GM12878 (cell line): ENCODE measurements at regions of chr4 and their contacts with region 1.

Region 1: DNA sequence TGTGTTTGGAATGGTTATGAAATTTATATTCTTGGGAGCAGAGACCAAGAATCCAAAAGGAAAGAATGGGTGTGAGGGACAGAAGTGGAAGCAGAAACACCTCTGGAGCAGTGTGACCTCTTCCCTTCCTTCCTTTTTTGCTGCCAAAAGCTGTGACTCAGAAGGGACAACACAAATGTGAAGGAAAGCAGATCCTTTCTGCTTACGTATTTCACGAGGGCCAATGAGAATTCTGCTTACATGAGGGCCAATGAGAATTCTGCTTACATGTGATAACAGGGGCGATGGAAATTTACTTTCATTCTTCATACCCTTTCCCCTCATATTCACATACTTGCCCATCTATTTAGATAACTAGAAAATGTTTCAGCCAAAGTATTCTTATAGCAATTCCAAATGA is 404.6 kb downstream of the PRDM5 start:
- DNase-seq: peak; percentile 42
- ATAC-seq: peak; percentile 68
- H3K4me3 ChIP-seq: no peak overlapping the region
- H3K27ac ChIP-seq: no peak overlapping the region
- H3K4me1 ChIP-seq: no peaks in the 10 kb centered on the region
- H3K27me3 ChIP-seq: no peaks in the 10 kb centered on the region
- CTCF ChIP-seq: no peak
- EP300 ChIP-seq: no peak
- POLR2A ChIP-seq: no peak
- RAD21 ChIP-seq: no peak

Region 2: DNA sequence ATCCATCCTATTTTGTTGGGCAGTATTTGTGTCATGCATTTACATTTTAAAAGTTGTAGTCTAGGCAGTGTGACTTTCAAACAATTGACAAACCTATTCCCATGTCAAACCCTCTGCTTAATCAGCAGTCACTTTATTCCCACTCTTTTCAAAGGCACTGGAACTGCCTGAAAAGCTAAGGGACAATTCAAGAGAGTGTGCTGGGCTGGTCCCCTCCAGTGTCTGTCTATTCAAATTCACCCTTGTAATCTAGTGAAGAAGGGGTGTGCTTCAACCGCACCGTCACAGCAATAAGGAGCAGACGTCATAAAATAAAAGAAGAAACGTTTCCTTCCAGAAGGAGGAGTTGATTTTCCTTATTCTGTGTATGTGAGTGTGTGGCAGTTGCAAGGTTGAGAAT is 254.3 kb before region 1 on chr4:
- CTCF ChIA-PET with region 1: no interaction called
- POLR2A ChIA-PET with region 1: interaction called, 11 read pairs
- RAD21 ChIA-PET with region 1: no interaction called
- SMC1A ChIA-PET with region 1: no interaction called
- in situ Hi-C with region 1: no loop called
- intact Hi-C with region 1: no loop called
- DNase-seq: no peak
- ATAC-seq: no peak
- H3K4me3 ChIP-seq: no peak overlapping the region
- H3K27ac ChIP-seq: no peak overlapping the region
- H3K4me1 ChIP-seq: no peaks in the 10 kb centered on the region
- H3K27me3 ChIP-seq: no peaks in the 10 kb centered on the region
- CTCF ChIP-seq: no peak
- EP300 ChIP-seq: no peak
- POLR2A ChIP-seq: no peak
- RAD21 ChIP-seq: no peak

Region 3: GRCh38 chr4:120498678-120499077 is 19.3 kb before region 1 on chr4:
- CTCF ChIA-PET with region 1: no interaction called
- POLR2A ChIA-PET with region 1: no interaction called
- RAD21 ChIA-PET with region 1: no interaction called
- SMC1A ChIA-PET with region 1: no interaction called
- in situ Hi-C with region 1: no loop called
- intact Hi-C with region 1: no loop called
- DNase-seq: no peak
- ATAC-seq: no peak
- H3K4me3 ChIP-seq: no peak overlapping the region
- H3K27ac ChIP-seq: no peak overlapping the region
- H3K4me1 ChIP-seq: no peaks in the 10 kb centered on the region
- H3K27me3 ChIP-seq: no peaks in the 10 kb centered on the region
- CTCF ChIP-seq: no peak
- EP300 ChIP-seq: no peak
- POLR2A ChIP-seq: no peak
- RAD21 ChIP-seq: no peak

Region 4: DNA sequence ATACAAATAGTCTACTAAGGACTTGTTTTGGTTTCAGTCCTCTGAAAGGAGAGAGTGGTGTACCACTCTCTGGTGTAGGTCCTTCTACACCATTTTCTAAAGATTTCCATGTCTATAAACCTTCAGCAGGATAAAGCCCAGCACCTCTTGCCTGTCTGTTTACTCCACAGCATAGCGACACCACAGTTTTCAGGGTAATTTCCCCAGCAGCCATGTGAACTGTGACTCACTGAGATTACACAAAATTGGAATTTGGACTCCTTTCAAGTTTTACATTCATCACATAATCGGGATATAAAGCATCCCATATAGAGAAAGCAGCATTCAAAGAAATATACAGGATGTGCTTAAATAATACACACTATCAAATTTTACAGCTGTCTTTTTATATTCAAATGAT is 175.0 kb after region 1 on chr4:
- CTCF ChIA-PET with region 1: no interaction called
- POLR2A ChIA-PET with region 1: no interaction called
- RAD21 ChIA-PET with region 1: no interaction called
- SMC1A ChIA-PET with region 1: no interaction called
- in situ Hi-C with region 1: no loop called
- intact Hi-C with region 1: no loop called
- DNase-seq: no peak
- ATAC-seq: no peak
- H3K4me3 ChIP-seq: no peak overlapping the region
- H3K27ac ChIP-seq: no peak overlapping the region
- H3K4me1 ChIP-seq: no peaks in the 10 kb centered on the region
- H3K27me3 ChIP-seq: no peaks in the 10 kb centered on the region
- CTCF ChIP-seq: no peak
- EP300 ChIP-seq: no peak
- POLR2A ChIP-seq: no peak
- RAD21 ChIP-seq: no peak